ENCODE measurements at regions of chr11 and their contacts with region 1.

Region 1: DNA sequence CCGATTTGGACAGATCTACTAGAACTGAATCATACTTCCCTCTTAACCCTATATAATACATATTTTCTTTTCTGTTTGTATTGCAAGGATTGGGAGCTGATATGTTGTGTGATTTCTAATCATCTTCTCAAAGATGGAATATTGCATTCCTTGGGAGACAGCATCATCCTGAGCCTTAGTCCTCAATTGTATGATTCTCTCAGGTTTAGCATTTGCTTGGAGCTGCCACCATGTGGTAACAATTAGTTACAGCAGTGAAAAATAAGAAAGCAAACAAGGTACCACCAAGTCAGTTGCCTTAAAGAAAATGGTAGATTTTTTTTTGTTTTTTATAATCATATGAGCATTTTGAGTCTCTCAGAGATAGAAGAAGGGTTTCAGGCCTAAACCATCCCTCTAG is 11.9 kb downstream of the SNX19 start:
- DNase-seq: no peak
- H3K4me3 Mint-ChIP-seq: no peak overlapping the region
- H3K27ac Mint-ChIP-seq: no peak overlapping the region
- H3K4me1 Mint-ChIP-seq: peaks cover 32% of the 10 kb centered on the region
- H3K27me3 Mint-ChIP-seq: no peaks in the 10 kb centered on the region

Region 2: DNA sequence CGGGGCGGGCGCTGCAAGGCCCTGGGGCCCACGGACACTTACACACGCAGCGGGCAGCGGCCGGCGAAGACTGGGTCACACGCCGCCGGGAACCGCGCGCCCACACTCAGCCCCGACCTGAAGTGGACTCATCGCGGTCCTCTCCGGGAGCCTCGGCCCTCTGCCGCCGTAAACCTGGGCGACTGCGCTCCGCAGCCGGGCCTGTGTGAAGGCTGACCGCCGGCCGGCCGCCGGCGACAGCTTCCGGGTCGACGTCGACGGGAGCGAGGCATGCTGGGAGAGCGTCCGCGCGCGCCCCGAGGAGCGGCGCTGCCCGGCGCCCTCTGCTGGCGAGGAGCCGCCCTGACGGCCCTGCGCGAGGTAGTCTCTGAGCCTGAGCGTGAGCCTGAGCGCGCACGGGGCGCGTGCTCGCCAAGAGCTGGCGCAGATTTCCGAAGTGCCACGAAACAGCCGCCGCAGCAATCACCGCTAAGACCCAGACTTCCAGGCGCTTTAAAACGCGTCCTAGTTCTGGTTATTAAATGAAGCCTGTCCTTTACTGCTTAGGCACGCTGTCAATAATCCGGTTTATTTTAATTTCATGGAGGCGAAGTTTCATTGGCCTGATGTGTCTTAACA is 12.0 kb after region 1 on chr11 and contains the start of gene SNX19:
- CTCF ChIA-PET with region 1: interaction called, 23 read pairs
- POLR2A ChIA-PET with region 1: no interaction called
- intact Hi-C with region 1: no loop called
- DNase-seq: peak; percentile 94
- H3K4me3 Mint-ChIP-seq: peak within 1 kb of the TSS; percentile 79
- H3K27ac Mint-ChIP-seq: peak within 1 kb of the TSS; percentile 58
- H3K4me1 Mint-ChIP-seq: peaks cover 34% of the 10 kb centered on the region
- H3K27me3 Mint-ChIP-seq: peaks cover 7% of the 10 kb centered on the region
- total RNA-seq, gene SNX19: 26.0 to 27.0 TPM